ENCODE measurements at regions of chr19 and their contacts with region 1.

Region 1: GRCh38 chr19:45439569-45440254 is 16.0 kb upstream of the ERCC1 start:
- DNase-seq: peak; percentile 78 to 95 (median 89)
- H3K4me3 ChIP-seq: peak overlapping the region in 2 of 3 donors; percentile 30 to 55
- H3K27ac ChIP-seq: peak overlapping the region; percentile 88 to 89
- H3K4me1 ChIP-seq: peaks cover 0 to 8% (median 4%) of the 10 kb centered on the region in 3 donors
- H3K27me3 ChIP-seq: no peaks in the 10 kb centered on the region
- CTCF ChIP-seq: peak; percentile 98

Region 2: DNA sequence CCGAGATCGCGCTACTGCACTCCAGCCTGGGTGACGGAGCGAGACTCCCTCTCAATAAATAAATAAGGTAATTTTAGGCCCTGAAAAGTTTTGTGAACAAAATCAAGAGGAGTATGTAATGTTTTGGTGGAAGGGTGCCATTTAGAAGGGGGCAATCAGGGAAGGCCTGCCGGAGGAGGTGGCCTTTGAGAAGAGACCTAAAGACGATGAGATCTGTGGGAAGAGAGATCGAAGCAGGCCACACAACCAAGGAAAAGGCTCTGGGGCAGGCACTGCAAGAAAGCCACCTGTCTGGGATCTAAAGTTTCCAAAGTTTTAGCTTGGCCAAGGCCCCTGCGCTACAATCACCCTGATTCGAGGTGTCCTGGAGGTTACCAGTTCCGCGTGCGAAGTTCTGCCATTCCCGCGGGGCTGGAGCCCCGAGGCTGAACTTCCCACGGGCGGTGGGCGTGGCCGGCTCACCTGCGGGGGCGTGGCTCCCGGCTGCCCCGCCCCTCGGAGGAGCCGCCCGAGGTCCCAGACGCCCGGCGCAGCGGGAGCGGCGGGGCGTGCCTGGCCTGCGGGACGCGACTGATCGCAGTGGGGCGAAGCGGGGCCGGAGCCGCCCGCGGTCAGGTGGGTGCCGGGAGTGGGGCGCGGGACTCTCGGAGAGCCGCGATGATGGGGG is 99.3 kb before region 1 on chr19 and contains the start of gene KLC3:
- intact Hi-C with region 1: no loop called
- DNase-seq: peak in 4 of 5 donors; percentile 50 to 71 (median 63)
- H3K4me3 ChIP-seq: peak within 1 kb of the TSS in 1 of 3 donors; percentile 32
- H3K27ac ChIP-seq: no peak within 1 kb of the TSS
- H3K4me1 ChIP-seq: peaks cover 0 to 6% (median 0%) of the 10 kb centered on the region in 3 donors
- H3K27me3 ChIP-seq: peaks cover 5% of the 10 kb centered on the region
- CTCF ChIP-seq: no peak
- total RNA-seq, gene KLC3: 3.3 TPM

Region 3: DNA sequence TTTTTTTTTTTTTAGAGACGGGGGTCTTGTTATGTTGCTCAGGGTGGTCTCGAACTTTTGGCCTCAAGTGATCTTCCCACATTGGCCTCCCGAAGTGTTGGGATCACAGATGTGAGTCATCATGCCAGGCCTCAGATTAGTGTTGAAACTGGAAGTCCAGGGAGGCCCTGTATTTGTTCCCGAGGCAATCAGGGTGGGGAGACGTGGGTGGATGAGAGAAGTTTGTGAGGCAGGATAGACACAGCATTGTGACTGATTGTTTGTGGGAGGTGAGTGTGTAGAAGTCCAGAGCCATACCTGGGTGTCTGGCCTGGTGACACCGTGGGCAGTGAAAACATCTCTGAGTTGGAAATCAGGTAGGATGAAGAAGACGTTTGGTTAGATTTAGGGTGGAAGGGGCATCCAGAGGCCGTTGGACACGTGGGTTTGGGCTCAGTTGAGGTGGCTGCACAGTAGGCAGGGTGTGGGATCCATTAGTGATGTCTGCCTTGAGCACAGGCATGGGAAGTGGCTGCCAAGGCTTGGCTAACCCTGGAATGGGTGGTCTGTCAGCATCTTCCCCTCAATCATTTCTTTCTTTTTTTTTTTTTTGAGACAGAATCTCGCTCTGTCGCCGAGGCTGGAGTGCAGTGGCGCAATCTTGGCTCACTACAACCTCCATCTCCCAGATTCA is 44.7 kb after region 1 on chr19:
- intact Hi-C with region 1: loop called (anchors 5 kb)
- DNase-seq: no peak
- H3K4me3 ChIP-seq: no peak overlapping the region
- H3K27ac ChIP-seq: no peak overlapping the region
- H3K4me1 ChIP-seq: no peaks in the 10 kb centered on the region
- H3K27me3 ChIP-seq: no peaks in the 10 kb centered on the region
- CTCF ChIP-seq: no peak

Region 4: GRCh38 chr19:45607071-45608029 is 167.6 kb after region 1 on chr19:
- intact Hi-C with region 1: no loop called
- DNase-seq: peak; percentile 85 to 92 (median 90)
- H3K4me3 ChIP-seq: peak overlapping the region in 2 of 3 donors; percentile 25 to 39
- H3K27ac ChIP-seq: peak overlapping the region; percentile 39 to 51
- H3K4me1 ChIP-seq: peaks cover 0 to 8% (median 0%) of the 10 kb centered on the region in 3 donors
- H3K27me3 ChIP-seq: no peaks in the 10 kb centered on the region
- CTCF ChIP-seq: peak; percentile 91

Region 5: GRCh38 chr19:45681391-45682015 is 241.8 kb after region 1 on chr19:
- intact Hi-C with region 1: no loop called
- DNase-seq: peak; percentile 79 to 94 (median 88)
- H3K4me3 ChIP-seq: peak overlapping the region; percentile 36 to 54 (median 38)
- H3K27ac ChIP-seq: peak overlapping the region; percentile 63 to 81
- H3K4me1 ChIP-seq: peaks cover 0 to 10% (median 5%) of the 10 kb centered on the region in 3 donors
- H3K27me3 ChIP-seq: no peaks in the 10 kb centered on the region
- CTCF ChIP-seq: peak; percentile 88